ENCODE measurements at regions of chr10 and their contacts with region 1.

Region 1: GRCh38 chr10:69237528-69238159 is 17.5 kb downstream of the HKDC1 start:
- DNase-seq: peak; percentile 67 to 78 (median 69)
- H3K4me3 ChIP-seq: no peak overlapping the region
- H3K4me3 Mint-ChIP-seq: peak overlapping the region in 1 of 2 donors; percentile 35
- H3K27ac ChIP-seq: no peak overlapping the region
- H3K27ac Mint-ChIP-seq: no peak overlapping the region
- H3K4me1 ChIP-seq: peaks cover 10 to 16% of the 10 kb centered on the region in 2 donors
- H3K4me1 Mint-ChIP-seq: peaks cover 14% of the 10 kb centered on the region
- H3K27me3 ChIP-seq: no peaks in the 10 kb centered on the region
- H3K27me3 Mint-ChIP-seq: peaks cover 2 to 3% (median 2%) of the 10 kb centered on the region in 3 donors
- CTCF ChIP-seq: peak; percentile 87

Region 2: GRCh38 chr10:68901104-68901927 is 336.3 kb before region 1 on chr10 and contains the start of gene DDX50:
- intact Hi-C with region 1: no loop called
- DNase-seq: peak; percentile 98 to 100 (median 99)
- H3K4me3 ChIP-seq: peak within 1 kb of the TSS; percentile 82 to 87 (median 84)
- H3K4me3 Mint-ChIP-seq: peak within 1 kb of the TSS; percentile 91 to 97
- H3K27ac ChIP-seq: peak within 1 kb of the TSS; percentile 86 to 98
- H3K27ac Mint-ChIP-seq: peak within 1 kb of the TSS; percentile 94 to 98 (median 97)
- H3K4me1 ChIP-seq: peaks cover 15 to 22% of the 10 kb centered on the region in 2 donors
- H3K4me1 Mint-ChIP-seq: peaks cover 29% of the 10 kb centered on the region
- H3K27me3 ChIP-seq: no peaks in the 10 kb centered on the region
- H3K27me3 Mint-ChIP-seq: peaks cover 0 to 2% (median 0%) of the 10 kb centered on the region in 3 donors
- CTCF ChIP-seq: no peak
- polyA plus RNA-seq, gene DDX50: 14.2 to 17.1 (median 17.0) TPM

Region 3: GRCh38 chr10:69392481-69393000 is 154.9 kb after region 1 on chr10:
- intact Hi-C with region 1: loop called (anchors 1 kb)
- DNase-seq: peak; percentile 78 to 83 (median 81)
- H3K4me3 ChIP-seq: no peak overlapping the region
- H3K4me3 Mint-ChIP-seq: no peak overlapping the region
- H3K27ac ChIP-seq: peak overlapping the region; percentile 9 to 48
- H3K27ac Mint-ChIP-seq: peak overlapping the region; percentile 24 to 77 (median 56)
- H3K4me1 ChIP-seq: peaks cover 8% of the 10 kb centered on the region in 2 donors
- H3K4me1 Mint-ChIP-seq: peaks cover 8% of the 10 kb centered on the region
- H3K27me3 ChIP-seq: no peaks in the 10 kb centered on the region
- H3K27me3 Mint-ChIP-seq: no peaks in the 10 kb centered on the region
- CTCF ChIP-seq: peak; percentile 92